Cardiac septum (tissue), 1 donor: ENCODE measurements at regions of chr7 and their contacts with region 1.

Region 1: DNA sequence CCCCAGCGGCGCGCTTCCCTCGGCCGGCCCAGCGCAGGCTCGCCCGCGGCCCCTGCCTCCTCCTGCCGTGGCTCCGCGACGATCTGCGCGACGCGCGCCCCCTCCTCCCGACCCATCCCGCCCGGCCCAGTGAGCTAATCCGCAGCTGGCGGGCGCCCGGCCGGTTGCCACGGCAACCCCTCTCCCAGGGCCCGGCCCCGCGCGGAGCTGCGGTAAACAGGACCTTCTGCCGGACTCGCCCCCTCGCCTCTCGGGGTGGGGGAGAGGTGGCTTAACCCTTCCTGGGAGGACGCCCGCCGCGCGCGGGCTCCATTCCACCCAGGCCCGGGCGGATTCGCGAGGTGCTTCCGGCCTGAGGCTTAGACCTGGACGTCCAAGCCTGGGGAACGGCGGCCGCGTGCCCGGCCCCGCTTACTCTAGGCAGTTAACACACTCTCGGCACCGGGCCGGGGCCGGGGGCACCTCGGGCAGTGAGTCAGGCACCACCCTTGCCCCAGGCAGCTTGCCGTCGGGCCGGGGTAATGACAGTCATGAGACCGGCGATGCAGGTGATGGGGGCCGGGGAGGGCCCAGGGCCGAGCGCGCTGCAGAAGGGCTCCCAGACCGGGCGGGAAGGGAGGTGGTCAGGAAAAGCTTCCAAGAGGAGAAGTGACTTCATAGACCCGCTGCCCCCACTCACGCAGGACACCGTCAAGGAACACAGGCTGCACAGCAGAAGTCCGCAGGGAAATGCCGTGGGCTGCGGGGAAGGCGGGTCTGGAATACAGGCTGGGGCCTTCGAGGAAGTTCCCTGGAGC is at the start of gene DENND2A:
- DNase-seq: peak; percentile 81
- total RNA-seq, gene DENND2A: 7.2 TPM

Region 2: GRCh38 chr7:140485500-140486265 is 155.2 kb before region 1 on chr7:
- intact Hi-C with region 1: no loop called
- DNase-seq: no peak

Region 3: GRCh38 chr7:140541513-140542227 is 99.3 kb before region 1 on chr7:
- intact Hi-C with region 1: loop called (anchors 5 kb)
- DNase-seq: peak; percentile 74

Region 4: DNA sequence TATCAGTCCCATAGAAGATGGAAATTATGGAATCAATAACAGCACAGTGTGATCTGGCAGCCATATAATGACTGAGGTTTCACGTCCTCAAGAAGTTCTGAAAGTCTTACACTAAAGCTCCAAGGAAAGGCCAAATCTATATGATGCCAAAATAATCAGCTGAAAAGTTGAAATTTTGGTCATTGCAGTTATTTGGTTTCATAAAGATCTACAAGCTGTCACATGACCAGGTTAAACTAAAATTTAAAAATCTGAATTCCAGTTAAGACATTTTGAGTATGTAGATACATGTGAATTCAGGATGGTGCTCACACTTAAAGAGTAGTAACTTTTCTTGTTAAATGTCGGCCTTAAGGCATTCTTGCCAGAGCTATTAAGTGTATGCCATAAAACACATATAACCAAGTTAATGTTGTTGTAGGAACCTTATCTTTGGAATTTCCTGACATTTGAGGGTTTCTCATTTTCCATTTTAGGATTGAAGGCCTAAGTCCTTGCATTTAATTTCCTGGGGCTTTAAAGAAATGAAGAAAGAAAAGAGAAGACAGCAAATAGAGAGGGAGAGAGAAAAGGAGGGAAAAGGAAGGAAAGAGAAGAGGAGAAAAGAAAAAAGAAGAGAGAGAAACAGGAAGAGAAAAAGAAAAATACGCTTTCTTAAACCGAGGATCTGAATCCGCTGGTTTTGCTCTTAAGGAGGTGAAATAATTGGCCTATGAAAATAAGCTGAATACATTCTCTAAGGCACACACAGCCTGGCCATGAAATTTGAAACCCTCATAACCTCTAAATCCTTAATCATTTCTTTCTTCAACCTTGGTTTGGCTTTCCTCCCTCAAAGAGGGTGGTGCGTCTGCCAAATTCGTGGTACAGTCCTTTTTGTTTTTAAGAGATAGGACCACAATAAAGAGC is 44.2 kb before region 1 on chr7:
- intact Hi-C with region 1: loop called (anchors 5 kb)
- DNase-seq: no peak